Activated CD4-positive, alpha-beta memory T cell treated with anti-CD3 and anti-CD28 coated beads for 36 hours (primary cell): ENCODE measurements at regions of chr22 and their contacts with region 1.

Region 1: DNA sequence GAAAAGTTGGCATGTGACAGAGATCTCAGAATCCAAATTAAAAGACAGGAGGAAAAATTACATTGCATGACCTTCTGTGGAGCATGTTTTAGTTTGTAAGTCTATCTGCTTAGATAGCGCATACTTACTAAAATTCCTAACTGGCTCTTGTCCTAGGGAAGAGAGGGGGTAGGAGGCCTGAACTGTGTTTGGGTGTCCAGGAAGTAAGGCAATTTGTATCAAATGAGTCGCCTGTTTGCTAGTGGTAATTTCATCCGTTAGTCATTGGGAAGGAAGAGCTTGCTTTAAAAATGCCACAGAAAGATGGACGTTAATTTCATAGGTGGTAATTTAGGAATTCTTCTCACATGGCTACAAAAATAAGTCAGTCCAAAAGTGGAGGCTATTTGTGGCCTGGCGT is 18.5 kb downstream of the GRK3 start:
- DNase-seq: no peak
- H3K4me3 Mint-ChIP-seq: no peak overlapping the region
- H3K27ac Mint-ChIP-seq: no peak overlapping the region
- H3K4me1 Mint-ChIP-seq: no peaks in the 10 kb centered on the region
- H3K27me3 Mint-ChIP-seq: no peaks in the 10 kb centered on the region

Region 2: DNA sequence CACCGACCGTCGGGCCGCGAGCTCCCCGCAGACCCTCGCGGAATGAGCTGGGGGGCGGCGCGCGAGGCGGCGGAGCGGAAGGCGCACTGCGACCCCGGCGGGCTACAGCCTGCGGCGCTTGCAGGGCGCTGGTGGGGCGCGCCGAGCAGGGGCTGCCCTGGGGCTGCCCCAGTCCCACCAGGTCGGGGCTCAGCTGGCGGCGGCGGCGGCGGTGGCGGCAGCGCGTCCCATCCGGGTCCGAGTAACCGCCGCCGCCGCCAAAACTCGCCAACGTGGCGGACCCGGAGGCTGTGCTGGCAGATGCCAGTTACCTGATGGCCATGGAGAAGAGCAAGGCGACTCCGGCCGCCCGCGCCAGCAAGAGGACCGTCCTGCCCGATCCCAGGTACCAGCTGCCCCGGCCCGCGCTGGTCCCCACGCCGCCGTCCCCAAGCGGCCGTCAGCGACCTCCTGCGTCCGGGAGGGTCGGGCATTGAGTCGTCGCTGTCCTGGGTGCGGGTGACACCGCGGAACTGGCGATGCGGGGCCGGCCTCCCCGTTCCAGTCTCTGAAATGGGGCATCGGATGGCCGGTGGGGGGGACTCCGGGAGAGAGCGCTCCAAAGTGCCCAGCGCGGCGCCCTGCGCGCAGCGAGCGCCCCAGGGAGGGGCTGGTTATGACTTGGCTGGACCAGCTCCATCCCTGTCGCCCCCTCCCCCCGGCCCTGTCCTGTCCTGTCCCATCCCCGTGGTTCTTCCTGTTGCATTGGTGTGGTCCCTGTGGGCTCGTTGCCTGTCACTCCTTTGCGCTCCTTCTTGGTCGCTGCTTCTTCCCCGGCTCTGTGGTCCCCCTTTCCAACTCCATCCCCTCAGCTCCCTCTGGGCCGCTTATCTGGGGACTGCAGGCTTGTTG is 300.0 kb before region 1 on chr22:
- CTCF ChIA-PET with region 1: no interaction called
- POLR2A ChIA-PET with region 1: no interaction called
- intact Hi-C with region 1: loop called (anchors 10 kb)
- DNase-seq: no peak
- H3K4me3 Mint-ChIP-seq: no peak overlapping the region
- H3K27ac Mint-ChIP-seq: no peak overlapping the region
- H3K4me1 Mint-ChIP-seq: peaks cover 11% of the 10 kb centered on the region
- H3K27me3 Mint-ChIP-seq: peaks cover 59% of the 10 kb centered on the region

Region 3: DNA sequence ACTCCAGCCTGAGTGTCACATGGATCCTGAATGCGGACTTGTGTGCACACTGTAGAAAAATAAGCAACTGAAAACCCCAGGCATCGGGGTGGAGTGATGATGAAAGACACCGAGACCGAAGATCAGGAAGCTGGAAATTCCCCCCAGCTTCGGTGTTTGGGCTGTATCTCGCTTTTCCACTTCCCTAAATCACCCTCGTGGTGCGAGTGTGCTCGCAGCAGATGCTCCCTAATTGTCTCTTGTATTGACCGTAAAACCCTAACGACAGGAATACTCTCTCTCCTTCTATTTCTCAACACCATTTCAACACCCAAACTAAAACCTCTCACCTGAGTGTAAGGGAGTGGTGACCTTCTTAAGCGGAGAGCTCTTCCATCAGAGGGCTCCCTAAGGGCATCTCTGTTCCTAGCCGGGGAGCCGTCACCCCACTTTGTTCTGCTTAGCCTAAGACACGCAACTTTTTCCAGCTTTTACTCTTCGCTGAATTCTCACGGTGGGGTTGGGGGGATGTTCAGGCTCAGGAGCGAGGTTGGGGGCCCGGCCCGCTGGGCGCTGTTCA is 19.1 kb before region 1 on chr22:
- CTCF ChIA-PET with region 1: no interaction called
- POLR2A ChIA-PET with region 1: no interaction called
- intact Hi-C with region 1: no loop called
- DNase-seq: peak; percentile 23
- H3K4me3 Mint-ChIP-seq: peak overlapping the region; percentile 79
- H3K27ac Mint-ChIP-seq: no peak overlapping the region
- H3K4me1 Mint-ChIP-seq: peaks cover 32% of the 10 kb centered on the region
- H3K27me3 Mint-ChIP-seq: peaks cover 12% of the 10 kb centered on the region

Region 4: DNA sequence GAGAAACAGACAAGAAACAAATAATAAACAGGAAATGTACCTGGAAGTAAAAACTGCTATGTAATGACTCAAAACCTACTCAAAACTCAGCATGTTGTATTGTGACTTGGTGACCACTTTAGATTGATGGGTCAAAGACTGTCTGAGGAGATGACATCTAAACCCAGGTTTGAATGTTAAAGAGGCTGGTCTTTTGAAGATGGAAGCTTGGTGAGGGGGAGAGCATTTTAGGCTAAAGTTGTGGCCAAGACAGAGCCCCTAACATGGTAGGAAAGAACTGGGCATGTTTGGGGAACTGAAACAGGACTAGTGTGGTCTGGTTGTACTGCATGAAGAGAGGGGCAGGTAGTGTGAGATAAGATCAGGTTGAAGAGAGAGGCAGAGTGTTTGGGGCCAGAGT is 73.8 kb after region 1 on chr22:
- CTCF ChIA-PET with region 1: no interaction called
- POLR2A ChIA-PET with region 1: no interaction called
- intact Hi-C with region 1: no loop called
- DNase-seq: no peak
- H3K4me3 Mint-ChIP-seq: no peak overlapping the region
- H3K27ac Mint-ChIP-seq: no peak overlapping the region
- H3K4me1 Mint-ChIP-seq: no peaks in the 10 kb centered on the region
- H3K27me3 Mint-ChIP-seq: no peaks in the 10 kb centered on the region

Region 5: DNA sequence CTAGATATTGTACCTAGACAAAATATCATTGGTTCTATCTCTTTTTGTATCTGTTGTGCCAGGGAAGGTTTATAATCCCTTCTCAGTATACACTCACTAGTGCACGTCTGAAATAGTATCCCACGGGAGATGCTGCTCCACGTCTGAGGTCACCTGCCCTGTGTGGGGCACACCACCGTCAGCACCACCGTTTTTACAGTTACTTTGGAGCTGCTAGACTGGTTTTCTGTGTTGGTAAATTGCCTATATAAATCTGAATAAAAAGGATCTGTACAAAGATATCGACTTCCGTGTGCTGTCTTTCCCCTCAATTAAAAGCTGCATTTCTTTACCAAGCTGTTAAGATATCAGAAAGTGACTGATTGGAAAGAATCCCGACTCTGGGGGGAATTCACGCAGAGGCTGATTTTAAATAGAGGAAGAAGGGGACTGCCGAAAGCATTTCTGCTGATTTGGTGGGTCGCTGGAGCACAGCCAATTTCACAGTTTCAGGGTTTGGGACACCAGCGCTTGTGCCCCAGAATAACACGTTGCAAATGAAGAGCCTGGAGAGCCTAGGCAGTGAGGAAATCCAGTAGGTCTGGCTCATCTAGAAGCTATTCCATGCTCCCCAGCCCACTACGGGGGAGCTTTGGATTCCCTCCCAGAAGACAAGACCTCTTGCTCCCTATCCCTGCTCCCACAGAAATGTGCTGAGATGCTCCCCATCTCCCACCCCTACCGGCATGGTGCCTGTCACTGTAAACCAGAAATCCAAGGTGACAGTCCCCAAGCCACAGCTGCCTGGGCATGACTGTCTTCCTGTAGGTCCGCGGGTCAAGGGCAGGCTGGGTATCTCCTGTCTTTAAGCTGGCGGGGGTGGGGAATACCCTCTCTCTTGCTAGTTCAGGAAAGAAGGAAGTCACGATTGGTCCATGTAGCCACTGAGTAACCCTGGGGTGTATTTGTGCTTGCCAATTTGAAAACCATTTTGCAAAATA is 146.4 kb after region 1 on chr22:
- CTCF ChIA-PET with region 1: no interaction called
- POLR2A ChIA-PET with region 1: no interaction called
- intact Hi-C with region 1: no loop called
- DNase-seq: no peak
- H3K4me3 Mint-ChIP-seq: no peak overlapping the region
- H3K27ac Mint-ChIP-seq: no peak overlapping the region
- H3K4me1 Mint-ChIP-seq: peaks cover 9% of the 10 kb centered on the region
- H3K27me3 Mint-ChIP-seq: no peaks in the 10 kb centered on the region

Region 6: DNA sequence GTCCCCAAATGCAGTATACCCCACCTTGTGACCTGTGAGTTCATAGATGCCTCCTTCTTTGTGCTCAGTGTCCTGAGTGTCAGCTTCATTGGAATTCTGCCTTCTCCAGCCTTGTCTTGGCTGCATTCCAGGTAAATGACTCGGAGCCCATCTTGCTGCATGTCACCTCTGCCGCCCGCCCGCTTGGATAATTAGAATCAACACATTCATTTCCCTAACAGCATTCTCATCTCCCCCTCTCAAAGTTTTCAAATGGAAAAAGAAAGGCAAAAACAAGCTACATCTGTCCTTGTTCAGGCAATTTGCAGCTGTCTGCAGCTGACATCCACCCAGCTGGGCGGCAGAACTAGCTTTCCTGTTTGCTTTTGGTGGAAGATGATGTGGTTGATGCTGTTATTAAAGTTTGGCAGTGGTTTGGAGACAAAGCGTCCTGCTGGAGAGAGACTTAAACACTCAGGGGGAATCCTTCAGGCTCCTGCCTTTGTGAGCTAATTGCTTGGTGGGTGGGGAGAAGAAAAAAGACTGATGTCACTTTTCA is 387.5 kb after region 1 on chr22:
- CTCF ChIA-PET with region 1: no interaction called
- POLR2A ChIA-PET with region 1: no interaction called
- intact Hi-C with region 1: no loop called
- DNase-seq: no peak
- H3K4me3 Mint-ChIP-seq: no peak overlapping the region
- H3K27ac Mint-ChIP-seq: no peak overlapping the region
- H3K4me1 Mint-ChIP-seq: peaks cover 10% of the 10 kb centered on the region
- H3K27me3 Mint-ChIP-seq: peaks cover 4% of the 10 kb centered on the region